Lower leg skin (tissue), 4 donors: ENCODE measurements at regions of chr17 and their contacts with region 1.

Region 1: GRCh38 chr17:57760046-57760445 is 14.9 kb upstream of the CCDC182 start:
- DNase-seq: no peak
- H3K4me3 ChIP-seq: no peak overlapping the region
- CTCF ChIP-seq: no peak
- POLR2A ChIP-seq: no peak

Region 2: GRCh38 chr17:57803025-57803424 is 43.0 kb after region 1 on chr17:
- intact Hi-C with region 1: loop called (anchors 1 kb)
- DNase-seq: no peak
- H3K4me3 ChIP-seq: no peak overlapping the region
- CTCF ChIP-seq: no peak
- POLR2A ChIP-seq: no peak